ENCODE measurements at regions of chr15 and their contacts with region 1.

Region 1: GRCh38 chr15:59372352-59373211 is at the start of gene MYO1E:
- DNase-seq: peak; percentile 91
- H3K4me3 ChIP-seq: peak within 1 kb of the TSS; percentile 97
- H3K27ac ChIP-seq: peak within 1 kb of the TSS; percentile 89
- H3K4me1 ChIP-seq: peaks cover 30% of the 10 kb centered on the region
- H3K27me3 ChIP-seq: no peaks in the 10 kb centered on the region
- CTCF ChIP-seq: no peak
- total RNA-seq, gene MYO1E: 156 and 213 TPM in 2 replicates

Region 2: GRCh38 chr15:59247364-59247763 is 125.2 kb before region 1 on chr15:
- CTCF ChIA-PET with region 1: no interaction called
- POLR2A ChIA-PET with region 1: no interaction called
- intact Hi-C with region 1: loop called (anchors 1 kb)
- DNase-seq: peak; percentile 42 to 48
- H3K4me3 ChIP-seq: no peak overlapping the region
- H3K27ac ChIP-seq: 0 out of 2 replicates have a peak overlapping the region, but pooled peaks have one; percentile 19
- H3K4me1 ChIP-seq: peaks cover 15% of the 10 kb centered on the region
- H3K27me3 ChIP-seq: no peaks in the 10 kb centered on the region
- CTCF ChIP-seq: peak; percentile 69

Region 3: GRCh38 chr15:59420986-59421618 is 48.5 kb after region 1 on chr15:
- CTCF ChIA-PET with region 1: no interaction called
- POLR2A ChIA-PET with region 1: no interaction called
- intact Hi-C with region 1: no loop called
- DNase-seq: no peak
- H3K4me3 ChIP-seq: no peak overlapping the region
- H3K27ac ChIP-seq: no peak overlapping the region
- H3K4me1 ChIP-seq: peaks cover 12% of the 10 kb centered on the region
- H3K27me3 ChIP-seq: no peaks in the 10 kb centered on the region
- CTCF ChIP-seq: no peak